CD14-positive monocyte (primary cell): ENCODE measurements at regions of chr19 and their contacts with region 1.

Region 1: DNA sequence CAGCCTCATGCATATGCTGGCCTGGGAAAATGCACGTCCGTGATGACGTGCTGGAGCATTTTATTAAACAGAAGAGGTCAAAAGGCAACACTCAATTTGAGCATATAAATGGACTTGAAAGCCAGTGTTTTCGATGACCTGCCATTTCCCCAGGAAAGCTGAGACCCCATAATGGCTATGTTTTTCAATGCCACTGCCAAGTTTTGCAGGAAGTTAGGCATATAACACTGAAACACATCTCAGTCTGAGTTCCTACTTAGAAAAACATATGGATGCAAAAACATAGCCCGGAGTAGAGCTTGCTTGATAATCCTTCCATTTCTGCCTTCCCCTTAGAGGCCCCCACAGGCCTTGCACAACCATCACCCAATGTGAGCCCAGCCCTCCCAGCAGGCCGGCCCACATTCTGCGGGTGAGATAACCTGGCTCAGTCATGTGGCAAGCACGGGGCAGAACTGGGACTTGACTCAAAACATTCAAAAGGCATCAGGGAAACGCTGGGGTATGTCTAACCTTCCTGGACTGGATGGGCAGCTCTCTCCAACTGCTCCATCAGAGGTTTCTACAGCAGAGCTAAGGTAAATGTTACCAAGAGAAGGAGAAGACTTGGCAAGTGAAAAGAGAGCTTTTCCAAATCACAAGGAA is 24.9 kb downstream of the EPS15L1 start:
- DNase-seq: peak; percentile 74 to 87 (median 81)
- H3K4me3 ChIP-seq: peak overlapping the region in 1 of 3 experiments; percentile 16
- H3K4me3 Mint-ChIP-seq: peak overlapping the region; percentile 40 to 76
- H3K27ac ChIP-seq: peak overlapping the region; percentile 70 to 81
- H3K27ac Mint-ChIP-seq: peak overlapping the region; percentile 96 to 99 (median 98)
- H3K4me1 ChIP-seq: peaks cover 77 to 83% of the 10 kb centered on the region in 2 donors
- H3K4me1 Mint-ChIP-seq: peaks cover 84% of the 10 kb centered on the region
- H3K27me3 ChIP-seq: no peaks in the 10 kb centered on the region
- H3K27me3 Mint-ChIP-seq: no peaks in the 10 kb centered on the region
- CTCF ChIP-seq: no peak

Region 2: DNA sequence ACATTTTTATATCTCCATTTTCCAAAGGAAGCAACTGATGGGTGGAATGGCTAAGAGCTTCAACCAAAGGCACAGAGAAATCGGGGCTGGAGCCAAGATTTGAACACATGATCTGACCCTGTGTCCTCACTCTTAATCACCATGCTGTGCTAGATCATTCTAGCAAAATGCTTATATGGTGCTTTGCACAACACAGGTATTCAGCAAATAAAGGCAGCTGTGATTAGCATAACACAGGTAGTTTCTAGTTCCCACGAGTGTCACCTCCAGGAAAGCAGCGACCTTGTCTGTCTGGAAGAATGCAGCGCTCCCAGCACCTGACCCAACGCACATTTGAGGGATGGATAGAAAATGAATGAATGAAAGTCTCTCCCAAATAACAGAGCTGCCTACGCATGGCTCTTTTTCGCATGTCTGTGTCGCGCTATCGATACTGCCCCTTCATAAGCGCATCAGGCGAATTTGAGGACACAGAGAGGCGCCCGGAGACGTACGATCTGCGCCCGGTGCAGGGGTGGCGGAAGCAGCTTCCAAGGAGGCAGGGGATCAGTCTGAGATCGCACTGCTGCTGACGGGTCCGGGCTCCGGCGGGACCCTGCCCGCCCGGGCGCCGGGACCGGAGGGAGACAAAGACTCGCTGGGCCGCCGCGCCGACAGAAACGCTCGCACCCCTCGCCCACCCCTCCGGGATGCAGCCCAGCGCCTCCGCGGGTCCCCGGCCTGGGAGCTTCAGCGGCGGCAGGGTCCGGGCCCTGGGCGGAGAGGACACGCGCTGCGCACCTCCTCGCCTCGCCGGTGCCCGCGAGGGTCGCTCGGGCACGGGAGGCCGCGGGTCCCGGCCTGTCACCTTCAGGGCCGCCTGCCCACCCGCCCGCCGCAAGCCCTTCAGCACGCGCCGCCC is 24.3 kb after region 1 on chr19:
- intact Hi-C with region 1: loop called in 1 of 2 experiments (anchors 2 kb)
- DNase-seq: peak in 1 of 3 donors; percentile 16
- H3K4me3 ChIP-seq: peak overlapping the region; percentile 58 to 89 (median 67)
- H3K4me3 Mint-ChIP-seq: peak overlapping the region; percentile 85 to 92
- H3K27ac ChIP-seq: peak overlapping the region in 1 of 2 donors; percentile 59
- H3K27ac Mint-ChIP-seq: peak overlapping the region in 5 of 7 donors; percentile 62 to 82 (median 71)
- H3K4me1 ChIP-seq: peaks cover 22 to 30% of the 10 kb centered on the region in 2 donors
- H3K4me1 Mint-ChIP-seq: peaks cover 31% of the 10 kb centered on the region
- H3K27me3 ChIP-seq: no peaks in the 10 kb centered on the region
- H3K27me3 Mint-ChIP-seq: peaks cover 0 to 2% (median 0%) of the 10 kb centered on the region in 3 donors
- CTCF ChIP-seq: no peak